AG04450 (cell line): ENCODE measurements at regions of chr2 and their contacts with region 1.

Region 1: GRCh38 chr2:120283649-120284048 is 31.0 kb downstream of the RALB start:
- DNase-seq: peak; percentile 26
- H3K4me3 ChIP-seq: no peak overlapping the region
- H3K27ac ChIP-seq: no peak overlapping the region
- H3K27me3 ChIP-seq: no peaks in the 10 kb centered on the region
- CTCF ChIP-seq: peak; percentile 75

Region 2: GRCh38 chr2:120252225-120253021 is 31.2 kb before region 1 on chr2 and contains the start of gene RALB:
- CTCF ChIA-PET with region 1: interaction called, 7 read pairs
- POLR2A ChIA-PET with region 1: interaction called, 10 read pairs
- DNase-seq: peak; percentile 95
- H3K4me3 ChIP-seq: peak within 1 kb of the TSS; percentile 90
- H3K27ac ChIP-seq: peak within 1 kb of the TSS; percentile 48
- H3K27me3 ChIP-seq: peaks cover 14% of the 10 kb centered on the region
- CTCF ChIP-seq: no peak
- polyA plus RNA-seq, gene RALB: 55.1 and 69.6 TPM in 2 replicates

Region 3: DNA sequence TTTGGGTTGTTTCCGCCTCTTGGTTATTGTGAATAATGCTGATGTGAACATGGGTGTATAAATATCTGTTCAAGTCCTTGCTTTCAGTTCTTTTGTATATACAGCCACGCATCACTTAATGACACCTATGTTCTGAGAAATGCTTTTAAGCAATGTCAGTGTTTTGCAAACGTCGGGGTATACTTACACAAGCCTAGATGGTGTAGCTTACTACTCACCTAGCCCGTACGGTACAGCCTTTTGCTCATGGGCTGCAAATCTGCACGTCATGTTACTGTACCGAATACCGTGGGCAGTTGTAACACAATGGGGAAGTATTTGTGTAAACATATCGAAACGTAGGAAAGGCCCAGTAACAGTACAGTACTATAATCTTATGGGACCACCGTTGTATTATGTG is 18.6 kb before region 1 on chr2:
- CTCF ChIA-PET with region 1: interaction called, 18 read pairs
- POLR2A ChIA-PET with region 1: interaction called, 3 read pairs
- DNase-seq: no peak
- H3K4me3 ChIP-seq: no peak overlapping the region
- H3K27ac ChIP-seq: no peak overlapping the region
- H3K27me3 ChIP-seq: no peaks in the 10 kb centered on the region
- CTCF ChIP-seq: no peak

Region 4: DNA sequence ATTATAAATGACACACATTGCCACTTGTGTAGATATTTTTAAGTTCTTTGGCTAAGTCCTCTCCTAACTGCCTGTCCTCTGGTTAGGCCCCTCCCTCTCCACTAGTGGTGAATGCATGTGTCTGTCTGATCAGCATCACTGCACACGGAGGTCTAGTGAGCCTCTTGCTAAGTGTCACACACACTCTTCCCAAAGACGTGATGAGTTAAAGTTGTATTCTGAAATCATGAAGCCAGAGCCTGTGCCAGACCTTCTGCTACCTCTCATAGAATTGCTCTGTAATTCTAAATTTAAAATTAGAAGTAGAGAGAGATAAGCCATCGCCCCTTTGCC is 10.3 kb after region 1 on chr2:
- CTCF ChIA-PET with region 1: interaction called, 16 read pairs
- POLR2A ChIA-PET with region 1: interaction called, 3 read pairs
- DNase-seq: no peak
- H3K4me3 ChIP-seq: no peak overlapping the region
- H3K27ac ChIP-seq: no peak overlapping the region
- H3K27me3 ChIP-seq: no peaks in the 10 kb centered on the region
- CTCF ChIP-seq: no peak

Region 5: DNA sequence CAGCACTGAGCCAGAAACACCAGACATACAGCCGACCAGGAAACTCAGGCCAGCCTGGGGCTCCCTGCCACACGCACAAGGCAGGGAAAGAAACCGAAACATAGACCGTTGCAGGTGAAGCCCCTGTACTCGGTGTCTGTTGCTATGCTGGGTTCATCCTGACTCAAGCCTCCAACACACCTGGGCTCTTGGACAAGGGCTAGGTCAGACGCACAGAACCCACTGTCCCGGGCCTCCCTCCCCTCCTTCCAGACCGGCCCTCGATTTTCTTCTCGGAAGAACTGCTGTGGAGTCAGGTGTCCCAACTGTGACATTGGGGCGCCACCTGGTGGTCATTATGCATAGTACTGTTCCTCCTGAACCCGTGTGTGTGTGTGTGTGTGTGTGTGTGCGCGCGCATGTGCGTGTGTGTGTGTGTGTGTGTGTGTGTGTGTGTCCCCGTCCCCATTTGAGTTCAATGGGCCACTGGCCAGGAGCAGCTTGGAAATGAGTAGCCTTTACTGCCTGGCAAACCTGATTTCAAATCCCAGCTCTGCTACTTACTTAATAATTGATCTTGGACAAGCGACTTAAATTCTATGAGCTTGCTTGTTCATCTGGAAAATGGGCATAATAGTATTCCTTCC is 396.6 kb after region 1 on chr2:
- CTCF ChIA-PET with region 1: interaction called, 11 read pairs
- POLR2A ChIA-PET with region 1: no interaction called
- DNase-seq: peak; percentile 70
- H3K4me3 ChIP-seq: no peak overlapping the region
- H3K27ac ChIP-seq: no peak overlapping the region
- H3K27me3 ChIP-seq: peaks cover 29% of the 10 kb centered on the region
- CTCF ChIP-seq: peak; percentile 74

Region 6: DNA sequence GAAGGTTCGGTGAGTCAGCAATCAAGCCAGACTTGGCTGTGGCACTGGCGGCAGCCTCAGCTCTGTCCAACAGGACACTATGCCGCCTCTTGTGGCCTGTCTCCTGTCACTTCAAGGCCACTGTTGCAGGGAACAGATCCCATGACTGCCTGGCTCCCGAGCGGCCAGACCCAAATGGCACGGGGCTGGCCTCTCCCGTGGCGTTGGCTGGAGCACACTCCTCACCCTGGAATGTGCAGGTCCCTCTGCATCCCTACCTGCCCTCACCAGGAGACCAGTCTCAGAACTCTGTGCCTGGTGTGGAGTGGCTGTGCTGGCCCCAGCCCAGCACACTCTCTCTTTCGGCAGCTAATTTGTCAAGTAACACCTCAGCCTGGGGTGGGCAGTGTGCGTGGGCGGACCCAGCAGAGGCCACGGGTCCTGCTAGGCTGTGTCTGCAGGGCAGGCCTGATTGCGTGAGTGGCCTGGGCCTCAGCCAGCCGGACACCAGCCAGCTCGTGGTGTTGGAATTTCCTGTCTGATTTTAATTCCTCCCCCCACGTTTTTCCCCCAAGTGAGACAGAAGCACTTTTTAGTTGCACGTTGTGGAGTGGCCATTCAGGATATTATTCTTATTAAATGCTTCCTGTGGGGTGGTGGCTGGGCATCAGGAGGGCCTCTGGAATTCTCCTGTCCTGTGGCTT is 631.3 kb after region 1 on chr2:
- CTCF ChIA-PET with region 1: no interaction called
- POLR2A ChIA-PET with region 1: no interaction called
- DNase-seq: peak; percentile 68
- H3K4me3 ChIP-seq: no peak overlapping the region
- H3K27ac ChIP-seq: peak overlapping the region; percentile 70
- H3K27me3 ChIP-seq: no peaks in the 10 kb centered on the region
- CTCF ChIP-seq: no peak